Mammary epithelial cell (primary cell): ENCODE measurements at regions of chr7 and their contacts with region 1.

Region 1: GRCh38 chr7:41705109-41705901 is 2.4 kb upstream of the INHBA start:
- DNase-seq: peak; percentile 86
- H3K4me3 ChIP-seq: peak overlapping the region; percentile 48 to 59 (median 51)
- H3K27ac ChIP-seq: peak overlapping the region; percentile 62
- H3K4me1 ChIP-seq: peaks cover 22% of the 10 kb centered on the region
- H3K27me3 ChIP-seq: no peaks in the 10 kb centered on the region
- CTCF ChIP-seq: peak; percentile 75 to 96

Region 2: DNA sequence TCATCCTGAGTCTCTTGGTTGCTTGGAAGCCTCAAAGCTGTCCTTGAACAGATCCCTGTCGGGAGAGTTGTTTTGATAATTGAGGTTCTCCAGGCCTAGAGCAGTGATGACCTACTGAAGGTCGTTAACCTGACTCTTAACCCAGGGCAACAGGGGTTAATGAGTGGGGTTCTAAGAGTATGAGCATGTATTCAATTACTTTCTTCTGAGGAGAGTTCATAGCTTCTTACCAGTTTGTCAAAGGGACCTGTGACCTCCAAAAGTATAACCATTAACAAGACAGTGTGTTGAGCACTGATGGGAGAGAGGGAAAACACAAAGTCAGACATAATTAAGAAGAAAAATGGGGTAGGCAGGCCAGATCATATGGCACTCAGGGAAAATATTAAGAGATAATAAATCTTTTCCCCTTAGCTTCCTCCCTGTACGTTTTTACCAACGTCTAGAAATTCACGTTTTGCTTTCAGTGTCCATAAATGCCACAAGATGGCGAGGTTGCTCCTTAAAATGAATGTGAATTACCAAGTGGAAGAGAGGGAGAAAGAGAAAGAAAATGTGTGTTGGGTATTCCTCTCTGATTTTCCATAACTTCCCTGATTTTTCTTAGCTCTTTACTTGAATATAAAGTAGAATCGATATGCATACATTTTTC is 1472.9 kb before region 1 on chr7:
- CTCF ChIA-PET with region 1: no interaction called
- dilution Hi-C with region 1: loop called (anchors 10 kb)
- in situ Hi-C with region 1: loop called in 1 of 2 experiments (anchors 25 kb)
- intact Hi-C with region 1: no loop called
- DNase-seq: peak; percentile 55
- H3K4me3 ChIP-seq: no peak overlapping the region
- H3K27ac ChIP-seq: no peak overlapping the region
- H3K4me1 ChIP-seq: no peaks in the 10 kb centered on the region
- H3K27me3 ChIP-seq: no peaks in the 10 kb centered on the region
- CTCF ChIP-seq: peak; percentile 63 to 74

Region 3: DNA sequence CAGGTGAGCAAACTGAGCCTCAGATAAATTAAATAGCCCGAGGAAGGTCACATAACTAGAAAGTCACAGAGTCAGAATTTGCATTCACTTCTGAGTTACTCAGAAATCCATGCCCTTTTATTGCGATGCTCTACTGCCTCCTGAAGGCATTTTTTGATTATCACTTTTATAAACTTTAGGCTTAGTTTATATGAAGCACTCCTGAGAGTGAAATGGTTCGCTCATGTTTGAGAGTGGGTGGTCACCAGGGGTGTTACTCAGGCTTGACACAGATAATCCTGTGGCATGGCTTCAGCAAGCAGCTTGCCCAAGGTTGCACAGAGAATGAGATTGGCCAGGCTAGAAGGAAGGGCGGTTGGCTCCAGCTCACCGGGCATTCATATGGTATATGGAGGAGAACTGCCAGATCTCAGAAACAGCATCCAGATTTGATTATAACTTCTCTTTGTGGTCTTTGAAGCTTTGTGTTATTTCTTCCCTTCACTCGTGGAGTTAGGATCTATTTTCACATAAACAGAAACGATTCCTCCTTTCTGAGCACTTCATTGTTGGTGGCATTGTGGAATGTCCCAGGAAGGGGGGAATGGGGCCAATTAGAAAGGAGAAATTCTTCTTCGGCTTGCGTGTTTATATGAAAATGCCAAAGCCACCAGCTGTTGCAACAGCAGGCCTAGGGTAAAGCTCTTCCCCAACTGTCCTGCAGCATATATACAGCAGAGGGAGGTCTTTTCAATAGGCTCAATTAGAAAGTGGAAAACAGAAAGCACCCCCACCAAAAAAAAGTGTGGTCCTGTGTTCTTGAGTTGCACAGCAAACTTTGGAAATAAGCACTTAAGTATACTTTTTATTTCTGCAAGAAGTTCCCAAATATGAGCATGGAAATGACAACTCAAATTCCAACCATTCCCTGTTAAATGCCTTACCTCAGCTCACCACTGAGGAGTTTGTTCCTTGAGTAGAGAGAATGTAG is 941.7 kb before region 1 on chr7:
- CTCF ChIA-PET with region 1: interaction called, 5 read pairs
- dilution Hi-C with region 1: no loop called
- in situ Hi-C with region 1: no loop called
- intact Hi-C with region 1: loop called (anchors 1 kb)
- DNase-seq: no peak
- H3K4me3 ChIP-seq: no peak overlapping the region
- H3K27ac ChIP-seq: no peak overlapping the region
- H3K4me1 ChIP-seq: peaks cover 7% of the 10 kb centered on the region
- H3K27me3 ChIP-seq: no peaks in the 10 kb centered on the region
- CTCF ChIP-seq: peak; percentile 30 to 51

Region 4: GRCh38 chr7:41003031-41003925 is 702.0 kb before region 1 on chr7:
- CTCF ChIA-PET with region 1: no interaction called
- dilution Hi-C with region 1: no loop called
- in situ Hi-C with region 1: no loop called
- intact Hi-C with region 1: loop called (anchors 1 kb)
- DNase-seq: peak; percentile 49
- H3K4me3 ChIP-seq: no peak overlapping the region
- H3K27ac ChIP-seq: peak overlapping the region; percentile 91
- H3K4me1 ChIP-seq: peaks cover 50% of the 10 kb centered on the region
- H3K27me3 ChIP-seq: no peaks in the 10 kb centered on the region
- CTCF ChIP-seq: peak; percentile 71 to 83

Region 5: DNA sequence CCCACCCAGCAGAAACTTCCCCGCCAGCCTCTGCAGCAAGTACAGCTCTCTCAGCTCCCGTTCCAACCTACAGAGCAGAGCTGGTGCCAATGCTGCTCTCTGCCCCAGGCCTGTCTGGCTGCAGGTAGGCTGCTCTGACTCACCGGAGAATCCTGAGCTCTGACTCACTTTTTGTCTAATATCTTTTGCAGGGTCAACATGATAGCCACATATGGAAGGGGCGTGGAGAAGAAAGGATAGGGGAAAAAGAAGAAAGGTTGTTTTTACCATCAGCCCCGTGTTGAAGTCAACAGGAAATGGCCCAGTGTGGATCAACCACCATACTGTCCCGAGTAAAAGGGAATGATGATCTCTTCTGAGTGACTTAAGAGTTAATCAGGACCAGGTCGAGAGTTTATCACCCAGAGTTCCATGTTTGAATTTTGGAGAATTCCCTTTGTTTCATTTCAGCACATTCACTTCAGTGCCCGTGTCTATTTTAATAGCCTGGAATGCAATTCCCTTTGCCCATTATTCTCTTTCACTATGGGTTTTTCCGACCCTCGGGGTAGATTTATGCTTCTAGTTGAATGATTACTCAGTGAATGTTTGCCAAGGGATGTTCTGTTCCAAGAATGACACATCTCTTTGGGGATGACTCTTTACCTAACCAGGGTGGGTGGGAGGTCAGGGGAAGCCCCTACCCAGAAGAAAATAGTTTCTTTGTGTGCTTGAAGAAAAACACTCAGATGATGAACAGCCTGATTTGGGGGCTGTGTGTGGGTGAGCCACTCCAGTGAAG is 597.4 kb before region 1 on chr7:
- CTCF ChIA-PET with region 1: no interaction called
- dilution Hi-C with region 1: no loop called
- in situ Hi-C with region 1: no loop called
- intact Hi-C with region 1: loop called (anchors 2 kb)
- DNase-seq: peak; percentile 99
- H3K4me3 ChIP-seq: peak overlapping the region in 1 of 3 experiments; percentile 10
- H3K27ac ChIP-seq: peak overlapping the region; percentile 100
- H3K4me1 ChIP-seq: peaks cover 47% of the 10 kb centered on the region
- H3K27me3 ChIP-seq: no peaks in the 10 kb centered on the region
- CTCF ChIP-seq: no peak

Region 6: GRCh38 chr7:41224063-41224806 is 481.1 kb before region 1 on chr7:
- CTCF ChIA-PET with region 1: no interaction called
- dilution Hi-C with region 1: no loop called
- in situ Hi-C with region 1: no loop called
- intact Hi-C with region 1: loop called (anchors 2 kb)
- DNase-seq: peak; percentile 98
- H3K4me3 ChIP-seq: no peak overlapping the region
- H3K27ac ChIP-seq: peak overlapping the region; percentile 93
- H3K4me1 ChIP-seq: peaks cover 32% of the 10 kb centered on the region
- H3K27me3 ChIP-seq: no peaks in the 10 kb centered on the region
- CTCF ChIP-seq: no peak